A549 (cell line): ENCODE measurements at regions of chr17 and their contacts with region 1.

Region 1: DNA sequence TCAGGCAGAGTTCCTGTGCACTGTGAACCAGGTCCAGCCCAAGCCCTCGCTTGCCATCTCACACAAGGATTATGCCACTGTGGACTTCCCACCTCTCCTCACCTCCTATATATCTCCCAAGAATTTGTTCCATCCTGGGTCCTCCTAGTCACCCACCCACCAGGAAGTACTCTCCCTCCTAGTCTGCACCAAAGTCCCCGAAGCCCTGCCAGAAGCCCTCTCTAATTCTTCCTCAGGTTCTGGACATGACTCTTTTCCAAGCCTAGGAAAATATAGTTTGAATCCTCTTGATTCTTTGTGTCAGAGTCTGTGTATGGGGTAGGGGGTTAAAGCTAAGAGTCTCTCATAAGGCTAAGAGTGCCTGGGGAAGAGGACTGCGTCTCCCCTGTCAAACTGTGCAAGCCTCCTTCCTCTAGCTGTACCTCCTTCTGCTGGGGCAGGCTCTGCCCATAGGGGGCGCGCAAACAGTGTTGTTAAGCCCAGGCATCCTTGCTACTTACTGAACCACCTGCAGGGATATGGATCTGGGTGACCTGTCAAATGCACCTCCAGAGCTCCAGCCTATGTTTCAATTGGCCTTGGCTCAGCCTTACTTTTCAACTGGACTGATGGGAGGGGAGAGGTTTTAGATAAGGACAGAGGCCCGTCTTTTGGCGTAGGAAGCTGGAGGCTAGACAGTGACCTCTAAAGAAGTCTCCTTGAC is 16.6 kb upstream of the DLX4 start:
- DNase-seq: peak; percentile 85 to 98
- ATAC-seq: peak; percentile 94 to 98
- H3K4me3 ChIP-seq: no peak overlapping the region
- H3K27ac ChIP-seq: no peak overlapping the region
- H3K4me1 ChIP-seq: peaks cover 5% of the 10 kb centered on the region; the same call in 1 of the 3 replicates
- CTCF ChIP-seq: peak; percentile 91
- EP300 ChIP-seq: no peak
- POLR2A ChIP-seq: no peak
- RAD21 ChIP-seq: peak; percentile 74 to 85

Region 2: GRCh38 chr17:49861150-49861892 is 91.0 kb before region 1 on chr17:
- CTCF ChIA-PET with region 1: interaction called, 29 read pairs
- POLR2A ChIA-PET with region 1: no interaction called
- DNase-seq: peak; percentile 66 to 82
- ATAC-seq: peak; percentile 42 to 65
- H3K4me3 ChIP-seq: no peak overlapping the region
- H3K27ac ChIP-seq: 0 out of 6 replicates have a peak overlapping the region, but pooled peaks of 1 of the 2 experiments have one; percentile 0
- H3K4me1 ChIP-seq: peaks cover 4% of the 10 kb centered on the region; the same call in 1 of the 3 replicates
- CTCF ChIP-seq: peak; percentile 98
- EP300 ChIP-seq: no peak
- POLR2A ChIP-seq: no peak
- RAD21 ChIP-seq: peak; percentile 99 to 100

Region 3: GRCh38 chr17:50064258-50065001 is 112.1 kb after region 1 on chr17:
- CTCF ChIA-PET with region 1: no interaction called
- POLR2A ChIA-PET with region 1: no interaction called
- DNase-seq: peak; percentile 94
- ATAC-seq: peak; percentile 51 to 71
- H3K4me3 ChIP-seq: peak overlapping the region; percentile 10; the same call in 1 of the 3 replicates
- H3K27ac ChIP-seq: peak overlapping the region; percentile 92 to 97
- H3K4me1 ChIP-seq: peaks cover 79% of the 10 kb centered on the region
- CTCF ChIP-seq: no peak
- EP300 ChIP-seq: peak; percentile 54 to 80; a peak in 3 of 5 replicates
- POLR2A ChIP-seq: no peak
- RAD21 ChIP-seq: peak in 1 of 2 experiments; percentile 43; a peak in 2 of 5 replicates